Breast epithelium (tissue), 4 donors: ENCODE measurements at regions of chr3 and their contacts with region 1.

Region 1: GRCh38 chr3:133023362-133023761 is 14.8 kb upstream of the TMEM108 start:
- DNase-seq: no peak
- H3K4me3 ChIP-seq: no peak overlapping the region
- H3K27ac ChIP-seq: no peak overlapping the region
- H3K4me1 ChIP-seq: no peaks in the 10 kb centered on the region
- H3K27me3 ChIP-seq: no peaks in the 10 kb centered on the region
- CTCF ChIP-seq: no peak
- POLR2A ChIP-seq: no peak

Region 2: DNA sequence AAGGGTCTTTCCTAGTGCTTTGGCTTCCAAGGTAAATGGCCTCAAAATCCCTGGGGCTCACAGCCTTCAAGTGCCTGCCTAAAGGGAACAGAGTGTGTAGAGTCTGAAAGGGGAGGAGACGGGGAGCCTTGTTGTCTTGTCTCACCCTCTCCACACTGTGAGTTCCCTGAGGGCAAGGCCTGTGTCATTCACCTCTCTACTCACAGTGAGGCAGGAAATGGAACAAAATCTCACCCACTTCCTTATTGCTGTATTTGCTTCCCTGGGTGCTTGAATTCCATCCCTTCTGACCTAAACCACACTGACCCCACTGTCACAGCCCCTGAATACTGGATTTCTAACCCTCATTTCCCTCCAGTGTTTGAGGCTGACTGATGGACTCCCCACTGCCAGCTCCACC is 1969.2 kb after region 1 on chr3:
- intact Hi-C with region 1: loop called (anchors 10 kb)
- DNase-seq: no peak
- H3K4me3 ChIP-seq: no peak overlapping the region
- H3K27ac ChIP-seq: no peak overlapping the region
- H3K4me1 ChIP-seq: no peaks in the 10 kb centered on the region
- H3K27me3 ChIP-seq: no peaks in the 10 kb centered on the region
- CTCF ChIP-seq: no peak
- POLR2A ChIP-seq: no peak